ENCODE measurements at regions of chr20 and their contacts with region 1.

Region 1: GRCh38 chr20:35994994-35995453 is 26.6 kb downstream of the CNBD2 start:
- DNase-seq: peak; percentile 86
- H3K4me3 Mint-ChIP-seq: no peak overlapping the region
- H3K27ac Mint-ChIP-seq: no peak overlapping the region
- H3K4me1 Mint-ChIP-seq: peaks cover 4% of the 10 kb centered on the region
- H3K27me3 Mint-ChIP-seq: no peaks in the 10 kb centered on the region

Region 2: GRCh38 chr20:35702051-35702823 is 292.8 kb before region 1 on chr20:
- CTCF ChIA-PET with region 1: no interaction called
- POLR2A ChIA-PET with region 1: no interaction called
- intact Hi-C with region 1: no loop called
- DNase-seq: no peak
- H3K4me3 Mint-ChIP-seq: no peak overlapping the region
- H3K27ac Mint-ChIP-seq: peak overlapping the region; percentile 58
- H3K4me1 Mint-ChIP-seq: peaks cover 54% of the 10 kb centered on the region
- H3K27me3 Mint-ChIP-seq: no peaks in the 10 kb centered on the region

Region 3: GRCh38 chr20:35883336-35883777 is 111.7 kb before region 1 on chr20:
- CTCF ChIA-PET with region 1: no interaction called
- POLR2A ChIA-PET with region 1: no interaction called
- intact Hi-C with region 1: no loop called
- DNase-seq: no peak
- H3K4me3 Mint-ChIP-seq: no peak overlapping the region
- H3K27ac Mint-ChIP-seq: no peak overlapping the region
- H3K4me1 Mint-ChIP-seq: peaks cover 8% of the 10 kb centered on the region
- H3K27me3 Mint-ChIP-seq: no peaks in the 10 kb centered on the region

Region 4: DNA sequence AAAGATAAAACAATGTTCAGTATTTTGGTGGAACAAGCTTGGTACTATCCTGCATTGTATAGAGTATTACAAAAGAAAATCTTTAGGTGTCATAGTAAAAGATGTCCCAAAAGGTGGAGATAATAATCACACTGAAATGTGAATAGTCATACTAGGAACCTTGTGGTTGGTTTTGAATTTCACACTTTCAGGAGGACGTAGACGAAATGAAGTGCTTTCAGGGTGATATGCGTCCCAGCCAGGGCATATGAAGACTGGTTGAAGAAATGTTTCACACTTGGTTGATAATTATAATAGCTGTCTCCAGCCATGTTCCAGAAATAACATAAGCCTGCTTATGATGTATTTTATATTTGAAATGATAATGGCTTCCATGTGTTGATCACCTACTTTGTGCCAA is 101.1 kb before region 1 on chr20:
- CTCF ChIA-PET with region 1: no interaction called
- POLR2A ChIA-PET with region 1: no interaction called
- intact Hi-C with region 1: no loop called
- DNase-seq: peak; percentile 28
- H3K4me3 Mint-ChIP-seq: no peak overlapping the region
- H3K27ac Mint-ChIP-seq: no peak overlapping the region
- H3K4me1 Mint-ChIP-seq: peaks cover 20% of the 10 kb centered on the region
- H3K27me3 Mint-ChIP-seq: no peaks in the 10 kb centered on the region

Region 5: DNA sequence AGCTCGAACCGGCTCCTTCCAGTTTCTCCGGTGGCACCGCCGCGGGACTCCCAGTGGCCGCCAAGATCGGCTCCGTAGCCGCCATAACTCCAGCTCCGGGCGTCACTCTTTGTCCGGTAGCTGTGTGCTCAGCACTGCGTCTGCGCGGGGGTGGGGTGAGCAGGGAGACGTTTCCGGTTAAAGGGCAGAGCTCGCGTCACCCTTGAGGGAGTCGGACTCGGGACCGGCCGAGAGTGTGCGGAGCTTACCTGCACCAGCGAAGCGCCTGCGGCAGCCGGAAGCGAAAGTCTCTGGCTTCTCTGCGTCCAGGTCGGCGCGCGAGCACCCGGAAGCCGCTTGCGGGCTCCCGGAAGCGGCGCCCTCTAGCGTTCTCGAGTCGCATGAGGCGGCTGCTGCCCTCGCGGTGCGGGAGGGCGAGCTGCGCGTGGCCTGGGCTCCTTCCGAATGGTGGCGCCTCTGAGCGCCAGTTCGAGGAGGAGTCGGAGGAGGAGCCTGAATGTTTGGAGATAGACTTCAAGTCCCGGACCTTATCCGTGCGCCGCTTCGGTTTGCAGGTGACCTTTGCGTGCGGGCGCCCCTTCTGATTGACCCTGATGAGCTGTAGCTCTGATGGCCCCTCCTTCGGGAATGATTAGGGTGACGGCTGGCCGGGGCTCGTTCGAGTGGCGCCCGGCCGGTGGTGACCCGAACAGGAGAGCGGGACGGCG is 40.7 kb before region 1 on chr20 and contains the start of gene SCAND1:
- CTCF ChIA-PET with region 1: interaction called, 17 read pairs
- POLR2A ChIA-PET with region 1: no interaction called
- intact Hi-C with region 1: no loop called
- DNase-seq: peak; percentile 98
- H3K4me3 Mint-ChIP-seq: peak within 1 kb of the TSS; percentile 100
- H3K27ac Mint-ChIP-seq: peak within 1 kb of the TSS; percentile 99
- H3K4me1 Mint-ChIP-seq: peaks cover 14% of the 10 kb centered on the region
- H3K27me3 Mint-ChIP-seq: no peaks in the 10 kb centered on the region
- total RNA-seq, gene SCAND1: 45.4 to 51.3 TPM

Region 6: DNA sequence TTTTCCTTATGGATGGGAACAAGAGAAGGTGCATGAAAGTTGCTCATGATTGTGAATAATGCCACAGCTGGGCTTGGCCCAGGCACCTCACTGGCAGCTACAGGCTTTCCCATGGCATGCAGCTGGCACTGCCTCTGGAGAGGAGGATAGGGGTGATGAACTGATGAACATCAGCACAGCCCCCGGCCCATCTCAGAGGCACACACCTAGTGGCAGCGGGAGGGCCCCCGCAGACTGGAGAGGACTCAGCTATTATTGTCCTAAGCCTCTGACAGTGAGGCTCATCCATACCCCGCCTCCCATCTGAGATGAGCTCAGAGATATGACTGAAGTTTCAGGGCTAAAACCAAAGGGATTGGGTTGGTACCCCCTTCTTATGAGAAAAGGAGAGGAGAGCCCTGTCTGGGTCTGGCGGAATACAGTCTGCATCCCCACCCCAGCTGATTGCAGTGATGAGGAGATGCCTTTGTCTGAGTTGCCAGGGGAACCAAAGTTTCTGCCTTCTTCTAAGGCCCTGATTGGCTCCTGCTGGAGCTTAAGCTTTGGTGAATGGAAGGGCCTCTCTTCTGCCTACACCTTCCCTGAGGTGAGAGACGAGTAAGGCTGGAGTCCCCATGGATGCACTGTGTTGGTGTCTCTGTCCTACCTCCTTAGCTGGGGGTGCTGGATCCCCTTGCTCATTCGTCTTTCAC is 132.0 kb after region 1 on chr20:
- CTCF ChIA-PET with region 1: interaction called, 18 read pairs
- POLR2A ChIA-PET with region 1: no interaction called
- intact Hi-C with region 1: no loop called
- DNase-seq: no peak
- H3K4me3 Mint-ChIP-seq: no peak overlapping the region
- H3K27ac Mint-ChIP-seq: no peak overlapping the region
- H3K4me1 Mint-ChIP-seq: no peaks in the 10 kb centered on the region
- H3K27me3 Mint-ChIP-seq: no peaks in the 10 kb centered on the region

Region 7: GRCh38 chr20:36145877-36146707 is 151.1 kb after region 1 on chr20:
- CTCF ChIA-PET with region 1: interaction called, 483 read pairs
- POLR2A ChIA-PET with region 1: no interaction called
- intact Hi-C with region 1: no loop called
- DNase-seq: no peak
- H3K4me3 Mint-ChIP-seq: no peak overlapping the region
- H3K27ac Mint-ChIP-seq: no peak overlapping the region
- H3K4me1 Mint-ChIP-seq: no peaks in the 10 kb centered on the region
- H3K27me3 Mint-ChIP-seq: peaks cover 14% of the 10 kb centered on the region

Region 8: GRCh38 chr20:36199345-36200257 is 204.6 kb after region 1 on chr20:
- CTCF ChIA-PET with region 1: interaction called, 34 read pairs
- POLR2A ChIA-PET with region 1: no interaction called
- intact Hi-C with region 1: loop called (anchors 2 kb)
- DNase-seq: peak; percentile 81
- H3K4me3 Mint-ChIP-seq: no peak overlapping the region
- H3K27ac Mint-ChIP-seq: no peak overlapping the region
- H3K4me1 Mint-ChIP-seq: peaks cover 4% of the 10 kb centered on the region
- H3K27me3 Mint-ChIP-seq: peaks cover 1% of the 10 kb centered on the region

Region 9: GRCh38 chr20:36421641-36422040 is 426.6 kb after region 1 on chr20:
- CTCF ChIA-PET with region 1: no interaction called
- POLR2A ChIA-PET with region 1: no interaction called
- intact Hi-C with region 1: no loop called
- DNase-seq: no peak
- H3K4me3 Mint-ChIP-seq: no peak overlapping the region
- H3K27ac Mint-ChIP-seq: no peak overlapping the region
- H3K4me1 Mint-ChIP-seq: no peaks in the 10 kb centered on the region
- H3K27me3 Mint-ChIP-seq: peaks cover 10% of the 10 kb centered on the region